ENCODE measurements at regions of chr14 and their contacts with region 1.

Region 1: DNA sequence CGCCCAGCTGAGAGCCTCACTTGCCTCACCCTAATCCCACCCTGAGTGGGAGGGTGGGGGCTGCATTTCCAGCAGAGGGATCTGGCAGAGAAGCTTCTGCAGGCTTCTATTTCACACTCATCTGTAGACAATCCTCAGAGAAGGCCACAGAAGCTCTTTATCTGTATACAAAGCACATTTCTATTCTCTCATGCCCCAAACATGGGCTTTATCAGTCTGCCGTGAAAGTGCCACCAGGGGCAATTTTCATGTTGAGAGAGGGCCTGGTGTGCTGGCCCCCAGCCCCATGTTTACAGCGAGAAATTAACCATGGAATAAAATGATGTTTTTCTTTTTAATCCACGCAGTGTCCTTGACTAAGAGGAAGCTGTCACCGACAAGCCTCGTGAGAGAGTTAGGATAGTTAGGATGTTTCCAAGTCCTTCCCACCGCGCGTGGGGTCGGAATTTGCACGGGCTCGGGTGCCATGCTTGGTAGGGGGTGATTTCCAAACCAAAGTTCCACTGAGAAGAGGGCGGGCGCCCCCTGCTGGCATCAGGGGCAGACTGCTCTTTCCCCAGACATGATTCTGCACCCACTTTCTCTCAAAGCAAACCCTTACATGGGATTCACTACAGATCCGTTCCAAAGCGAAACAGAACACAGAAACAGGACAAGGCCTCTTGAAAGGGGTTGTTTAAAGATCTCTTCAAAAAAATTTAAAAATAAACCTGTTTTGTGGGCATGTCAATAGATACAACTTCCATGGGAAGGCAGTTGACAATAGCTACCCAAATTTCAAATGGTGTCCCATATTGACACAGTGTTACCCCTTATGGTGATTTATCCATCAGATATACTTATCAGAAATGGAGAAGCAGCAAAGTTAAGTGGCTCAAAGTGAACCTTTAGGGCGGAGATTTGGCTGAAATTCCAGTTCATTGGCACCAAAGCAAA is 19.4 kb downstream of the BDKRB1 start:
- DNase-seq: peak; percentile 53 to 72
- H3K4me3 ChIP-seq: no peak overlapping the region
- H3K27ac ChIP-seq: peak overlapping the region; percentile 9 to 38
- H3K4me1 ChIP-seq: no peaks in the 10 kb centered on the region
- H3K27me3 ChIP-seq: no peaks in the 10 kb centered on the region
- CTCF ChIP-seq: peak; percentile 87 to 91 (median 90)
- POLR2A ChIP-seq: no peak

Region 2: DNA sequence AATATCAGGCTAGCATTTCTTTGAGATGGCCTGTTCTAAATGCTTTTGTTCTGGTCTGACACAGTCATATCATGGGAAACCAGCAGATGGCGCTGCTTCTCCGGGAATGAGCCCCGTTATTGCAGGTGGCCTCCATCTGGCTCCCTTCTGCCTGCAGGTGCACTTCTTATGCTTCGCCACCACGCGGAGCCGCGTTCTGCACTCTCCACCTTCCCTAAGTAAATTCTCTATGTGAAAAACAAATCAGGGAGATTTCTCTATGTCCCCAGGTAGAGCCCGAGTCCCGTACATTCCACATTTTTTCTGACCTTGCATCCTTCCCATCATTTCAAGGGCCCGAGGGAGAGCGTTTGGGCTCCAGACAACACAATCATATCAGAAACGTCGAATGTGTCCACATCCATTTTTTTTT is 714.4 kb before region 1 on chr14:
- intact Hi-C with region 1: loop called (anchors 5 kb)
- DNase-seq: peak; percentile 85 to 92
- H3K4me3 ChIP-seq: no peak overlapping the region
- H3K27ac ChIP-seq: no peak overlapping the region
- H3K4me1 ChIP-seq: no peaks in the 10 kb centered on the region
- H3K27me3 ChIP-seq: no peaks in the 10 kb centered on the region
- CTCF ChIP-seq: peak; percentile 95 to 99 (median 99)
- POLR2A ChIP-seq: no peak

Region 3: GRCh38 chr14:96100161-96101029 is 175.1 kb before region 1 on chr14:
- intact Hi-C with region 1: loop called (anchors 10 kb)
- DNase-seq: peak; percentile 62 to 84
- H3K4me3 ChIP-seq: no peak overlapping the region
- H3K27ac ChIP-seq: no peak overlapping the region
- H3K4me1 ChIP-seq: peaks cover 0 to 2% of the 10 kb centered on the region in 2 donors
- H3K27me3 ChIP-seq: no peaks in the 10 kb centered on the region
- CTCF ChIP-seq: peak; percentile 73 to 94 (median 86)
- POLR2A ChIP-seq: no peak

Region 4: DNA sequence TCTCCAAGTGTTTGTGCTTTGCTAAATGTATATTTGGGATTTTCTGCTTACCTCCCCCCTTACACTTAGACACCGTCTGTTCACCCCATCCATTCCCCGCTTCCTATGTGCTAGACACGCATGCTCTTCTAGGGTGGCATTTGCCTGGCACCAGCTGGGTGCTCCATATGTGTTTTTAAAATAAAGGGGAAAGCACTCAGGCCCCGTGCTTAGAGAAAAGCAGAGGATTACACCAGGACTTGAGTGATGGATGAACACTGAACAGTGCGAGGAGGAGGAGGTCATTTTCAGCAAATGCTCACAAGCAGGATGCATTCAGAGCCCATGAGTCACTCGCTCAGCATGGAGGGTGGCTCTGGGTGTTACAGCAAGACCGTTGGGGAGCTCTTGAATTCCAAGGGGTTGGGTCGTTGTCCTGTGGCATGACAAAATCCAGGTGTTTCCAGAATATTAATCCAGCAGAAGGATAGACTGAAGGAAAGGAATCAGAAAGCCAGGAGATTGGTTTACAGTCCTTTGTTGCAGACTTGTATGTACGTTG is 22.4 kb before region 1 on chr14:
- intact Hi-C with region 1: no loop called
- DNase-seq: no peak
- H3K4me3 ChIP-seq: no peak overlapping the region
- H3K27ac ChIP-seq: peak overlapping the region in 1 of 2 donors; percentile 38
- H3K4me1 ChIP-seq: peaks cover 0 to 3% of the 10 kb centered on the region in 2 donors
- H3K27me3 ChIP-seq: no peaks in the 10 kb centered on the region
- CTCF ChIP-seq: no peak
- POLR2A ChIP-seq: no peak

Measured in breast epithelium (tissue), 4 donors.